ENCODE measurements at regions of chrX and their contacts with region 1.

Region 1: DNA sequence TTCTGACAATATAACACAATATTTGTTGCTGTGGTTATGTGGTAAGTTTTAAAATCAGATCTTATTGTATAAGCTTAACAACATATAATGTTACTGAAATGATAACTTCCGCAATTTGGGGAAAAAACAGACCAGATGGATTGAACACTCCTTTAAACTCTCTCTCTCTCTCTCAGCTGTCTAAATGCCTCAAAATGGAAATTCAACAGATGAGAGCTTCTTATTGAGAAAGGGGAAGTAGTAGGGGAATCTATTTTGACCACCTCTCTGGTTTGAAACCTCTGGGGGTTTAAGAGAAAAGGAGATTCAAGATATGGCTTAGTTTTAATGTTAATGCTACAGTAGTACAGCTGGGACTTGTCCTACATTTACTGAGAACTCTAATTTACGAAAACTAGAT is 40.3 kb downstream of the DMD start:
- DNase-seq: peak; percentile 87
- H3K4me3 ChIP-seq: peak overlapping the region; percentile 31
- H3K27ac ChIP-seq: peak overlapping the region; percentile 97
- H3K4me1 ChIP-seq: peaks cover 57% of the 10 kb centered on the region
- CTCF ChIP-seq: no peak

Region 2: GRCh38 chrX:32448320-32448719 is 722.7 kb before region 1 on chrX:
- CTCF ChIA-PET with region 1: no interaction called
- POLR2A ChIA-PET with region 1: no interaction called
- intact Hi-C with region 1: loop called (anchors 5 kb)
- DNase-seq: peak; percentile 86
- H3K4me3 ChIP-seq: peak overlapping the region; percentile 36
- H3K27ac ChIP-seq: peak overlapping the region; percentile 92
- H3K4me1 ChIP-seq: peaks cover 55% of the 10 kb centered on the region
- CTCF ChIP-seq: no peak

Region 3: DNA sequence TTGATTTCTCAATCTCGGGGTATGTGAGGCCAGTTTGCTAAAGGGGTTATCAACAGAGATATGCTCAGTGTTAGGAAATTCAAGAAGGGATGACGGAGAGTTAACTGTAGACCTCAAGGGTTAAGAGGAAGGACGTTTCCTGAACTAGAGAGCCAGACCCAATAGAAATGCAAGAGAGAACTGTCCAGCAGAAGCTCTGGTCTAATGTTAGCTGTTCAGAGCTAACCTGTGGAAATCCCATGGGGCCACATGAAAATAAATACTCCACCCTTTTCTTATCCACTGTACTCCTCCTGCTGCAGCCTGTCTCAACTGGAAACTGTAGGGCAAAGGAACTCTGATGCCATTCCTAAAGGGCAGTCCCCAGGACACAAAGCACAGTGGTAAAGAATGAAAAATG is 234.0 kb before region 1 on chrX:
- CTCF ChIA-PET with region 1: no interaction called
- POLR2A ChIA-PET with region 1: no interaction called
- intact Hi-C with region 1: no loop called
- DNase-seq: no peak
- H3K4me3 ChIP-seq: no peak overlapping the region
- H3K27ac ChIP-seq: no peak overlapping the region
- H3K4me1 ChIP-seq: no peaks in the 10 kb centered on the region
- CTCF ChIP-seq: no peak

Region 4: DNA sequence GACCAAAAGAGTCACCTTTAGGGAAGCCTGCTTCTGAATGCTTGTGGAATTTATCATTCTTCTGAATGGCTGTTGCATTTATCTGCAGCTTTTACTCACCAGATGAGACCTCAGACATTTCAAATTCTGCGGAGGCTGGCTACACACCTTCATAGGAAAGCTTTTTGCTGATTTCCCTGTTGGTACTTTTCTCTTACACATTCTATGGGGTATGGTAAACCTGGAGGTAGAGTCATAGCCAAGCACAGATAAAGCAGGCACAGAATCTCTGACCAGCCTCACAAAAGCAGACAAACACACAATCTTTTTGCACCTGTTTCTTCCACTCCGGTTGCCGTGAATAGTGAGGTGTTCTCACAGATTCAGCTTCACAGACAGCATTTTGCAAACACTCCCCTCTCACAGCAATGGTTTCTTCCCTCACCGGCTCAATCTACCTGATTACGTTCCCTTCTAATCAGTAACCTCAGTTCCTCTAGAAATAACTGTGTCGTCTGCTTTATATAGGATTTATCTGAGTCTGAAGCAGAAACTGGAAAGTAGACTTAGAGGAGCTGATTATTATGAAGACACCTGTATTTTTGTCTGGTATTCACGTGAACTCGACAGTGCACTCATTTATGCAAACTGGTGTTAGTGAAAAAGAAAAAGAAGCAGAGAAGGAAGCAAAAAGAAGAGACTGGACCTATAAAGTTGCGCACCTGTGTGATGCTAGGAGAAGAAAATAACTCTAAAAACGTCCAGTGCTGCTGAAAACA is 42.8 kb before region 1 on chrX:
- CTCF ChIA-PET with region 1: no interaction called
- POLR2A ChIA-PET with region 1: interaction called, 5 read pairs
- intact Hi-C with region 1: loop called (anchors 2 kb)
- DNase-seq: peak; percentile 83
- H3K4me3 ChIP-seq: peak overlapping the region; percentile 65
- H3K27ac ChIP-seq: peak overlapping the region; percentile 98
- H3K4me1 ChIP-seq: peaks cover 43% of the 10 kb centered on the region
- CTCF ChIP-seq: no peak

Region 5: DNA sequence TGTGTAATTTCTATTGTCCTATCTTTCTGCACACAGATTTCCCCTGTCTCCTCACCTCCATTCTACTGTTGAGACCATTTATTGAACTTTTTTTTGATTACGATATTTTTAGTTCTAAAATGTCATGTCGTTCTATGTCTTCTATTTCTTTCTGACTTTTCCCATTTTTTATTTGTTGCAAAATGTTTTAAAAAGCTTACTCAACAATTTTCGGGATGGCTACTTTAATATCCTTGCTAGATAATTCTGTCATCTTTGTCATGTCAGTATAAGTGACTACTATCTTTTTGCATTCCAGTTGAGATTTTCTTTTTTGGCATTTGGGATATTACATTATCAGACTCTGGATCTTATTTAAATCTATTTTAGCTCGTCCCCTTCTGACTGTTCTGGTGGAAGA is 47.8 kb after region 1 on chrX:
- CTCF ChIA-PET with region 1: no interaction called
- POLR2A ChIA-PET with region 1: no interaction called
- intact Hi-C with region 1: loop called (anchors 5 kb)
- DNase-seq: no peak
- H3K4me3 ChIP-seq: no peak overlapping the region
- H3K27ac ChIP-seq: no peak overlapping the region
- H3K4me1 ChIP-seq: no peaks in the 10 kb centered on the region
- CTCF ChIP-seq: no peak

Region 6: GRCh38 chrX:33434256-33435092 is 263.4 kb after region 1 on chrX:
- CTCF ChIA-PET with region 1: no interaction called
- POLR2A ChIA-PET with region 1: no interaction called
- intact Hi-C with region 1: no loop called
- DNase-seq: peak; percentile 73
- H3K4me3 ChIP-seq: peak overlapping the region; percentile 29
- H3K27ac ChIP-seq: no peak overlapping the region
- H3K4me1 ChIP-seq: no peaks in the 10 kb centered on the region
- CTCF ChIP-seq: peak; percentile 76